ENCODE measurements at regions of chr6 and their contacts with region 1.

Region 1: DNA sequence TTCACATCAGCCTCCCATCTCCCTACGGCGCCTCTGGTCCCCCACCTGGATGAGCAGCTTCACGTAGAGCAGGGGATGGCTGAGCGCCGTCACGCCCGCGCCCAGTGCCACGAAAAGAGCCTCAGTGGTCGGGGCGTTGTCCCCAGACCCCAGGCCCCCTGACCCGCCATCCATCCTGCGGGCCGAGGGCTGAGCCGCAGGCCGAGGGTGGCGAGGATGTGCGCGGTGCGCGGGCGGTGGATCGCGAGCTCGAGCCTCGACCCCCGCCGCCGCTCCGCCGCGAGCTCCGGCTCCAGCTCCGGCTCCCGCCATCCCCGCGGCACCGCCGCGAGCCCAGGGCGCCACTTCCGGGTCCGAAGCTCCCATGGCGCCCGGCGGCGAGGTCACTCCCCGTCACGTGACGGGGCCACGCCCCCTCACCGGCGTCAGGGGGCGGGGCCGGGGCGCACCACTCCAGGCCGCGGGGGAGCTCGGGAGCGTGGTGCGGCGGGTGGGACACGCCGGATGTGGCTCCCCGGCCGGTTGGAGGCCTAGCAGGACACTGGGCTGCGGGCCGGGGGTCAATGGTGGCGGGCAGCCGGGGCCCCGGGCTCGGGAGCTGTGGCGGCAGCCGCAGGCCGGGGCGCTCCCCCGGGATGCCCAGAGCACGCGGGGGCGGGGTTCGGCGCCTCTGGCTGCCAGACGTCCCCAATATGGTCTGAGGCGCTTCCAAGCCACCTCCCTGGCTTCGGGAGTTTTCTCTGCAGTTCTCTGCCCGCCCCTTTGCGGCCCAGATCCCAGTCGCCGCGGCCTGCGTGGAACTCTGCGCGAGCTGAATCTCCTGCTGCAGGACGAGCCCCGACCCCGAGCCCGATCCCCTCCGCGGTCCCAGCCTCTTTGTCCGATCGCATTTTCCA is at the start of gene MTCH1:
- DNase-seq: peak; percentile 95 to 98 (median 98)
- ATAC-seq: peak; percentile 91
- H3K4me3 ChIP-seq: peak within 1 kb of the TSS; percentile 95
- H3K27ac ChIP-seq: peak within 1 kb of the TSS; percentile 84
- H3K4me1 ChIP-seq: peaks cover 25 to 31% of the 10 kb centered on the region in 2 experiments
- H3K27me3 ChIP-seq: peaks cover 0 to 2% of the 10 kb centered on the region in 2 experiments; a peak in 2 of 5 replicates
- CTCF ChIP-seq: 0 out of 6 replicates have a peak, but pooled peaks of 1 of the 3 experiments have one; percentile 1
- EP300 ChIP-seq: 0 out of 2 replicates have a peak, but pooled peaks have one; percentile 24
- POLR2A ChIP-seq: peak; percentile 83
- RAD21 ChIP-seq: no peak
- polyA plus RNA-seq, gene MTCH1: 7.9 to 14.1 TPM

Region 2: DNA sequence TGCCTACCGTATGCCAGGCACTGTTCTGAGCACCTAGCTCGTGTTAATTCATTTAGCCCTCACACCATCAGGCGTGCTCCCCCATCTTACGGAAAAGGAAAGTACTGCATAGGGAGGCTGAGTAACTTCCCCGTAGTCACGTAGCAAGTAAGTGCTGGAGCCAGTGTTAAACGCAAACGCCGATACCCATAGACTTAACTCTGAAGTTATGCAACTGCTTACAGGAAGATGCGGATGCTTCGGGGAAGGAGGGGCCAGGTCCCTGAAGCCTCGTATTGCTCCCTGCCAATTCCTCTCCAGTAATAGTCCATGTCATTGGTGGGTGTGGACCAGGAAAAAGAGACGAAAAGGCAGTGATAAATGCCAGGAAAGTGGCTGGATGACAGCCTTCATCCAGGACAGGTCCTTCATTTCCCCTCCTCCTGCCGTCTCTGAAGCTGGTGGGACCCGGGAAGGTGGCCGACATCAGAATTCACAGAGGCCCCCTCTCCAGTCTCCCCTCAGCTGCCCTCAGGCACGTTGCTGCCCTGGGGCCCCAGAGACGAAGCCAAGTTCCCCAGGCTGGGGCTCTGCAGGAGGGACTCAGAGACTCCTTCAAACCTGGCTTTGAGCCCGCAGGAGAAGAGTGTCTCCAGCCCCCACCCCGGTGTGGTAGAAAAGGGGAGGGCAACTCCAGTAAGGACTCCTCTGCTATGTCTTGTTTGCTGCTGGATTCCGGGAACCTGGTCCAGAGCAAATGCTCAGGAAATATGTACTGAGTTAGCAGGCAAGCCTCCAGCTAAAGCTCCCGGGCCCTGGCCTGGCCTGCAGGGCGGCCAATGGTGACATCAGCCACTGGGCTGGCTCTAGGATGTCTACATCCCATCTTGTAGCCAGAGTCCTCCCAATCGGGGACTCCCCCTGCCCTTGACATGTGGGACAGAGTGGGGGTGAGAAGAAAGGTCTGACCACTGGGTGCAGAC is 250.7 kb before region 1 on chr6:
- CTCF ChIA-PET with region 1: no interaction called
- POLR2A ChIA-PET with region 1: no interaction called
- in situ Hi-C with region 1: no loop called
- intact Hi-C with region 1: no loop called
- DNase-seq: no peak
- ATAC-seq: peak; percentile 51
- H3K4me3 ChIP-seq: no peak overlapping the region
- H3K27ac ChIP-seq: no peak overlapping the region
- H3K4me1 ChIP-seq: peaks cover 0 to 10% of the 10 kb centered on the region in 2 experiments; a peak in 3 of 5 replicates
- H3K27me3 ChIP-seq: peaks cover 46 to 82% of the 10 kb centered on the region in 2 experiments
- CTCF ChIP-seq: no peak
- EP300 ChIP-seq: no peak
- POLR2A ChIP-seq: no peak
- RAD21 ChIP-seq: no peak

Region 3: GRCh38 chr6:37005061-37005810 is 19.2 kb after region 1 on chr6 and contains the start of gene FGD2:
- CTCF ChIA-PET with region 1: no interaction called
- POLR2A ChIA-PET with region 1: interaction called, 5 read pairs
- in situ Hi-C with region 1: no loop called
- intact Hi-C with region 1: loop called (anchors 1 kb)
- DNase-seq: peak; percentile 54 to 65 (median 62)
- ATAC-seq: peak; percentile 84
- H3K4me3 ChIP-seq: no peak within 1 kb of the TSS
- H3K27ac ChIP-seq: no peak within 1 kb of the TSS
- H3K4me1 ChIP-seq: peaks cover 2 to 12% of the 10 kb centered on the region in 2 experiments; a peak in 3 of 5 replicates
- H3K27me3 ChIP-seq: peaks cover 25 to 62% of the 10 kb centered on the region in 2 experiments
- CTCF ChIP-seq: no peak
- EP300 ChIP-seq: no peak
- POLR2A ChIP-seq: no peak
- RAD21 ChIP-seq: no peak
- polyA plus RNA-seq, gene FGD2: not detected

Measured in K562 (cell line).